HAP-1 (cell line): ENCODE measurements at regions of chr10 and their contacts with region 1.

Region 1: DNA sequence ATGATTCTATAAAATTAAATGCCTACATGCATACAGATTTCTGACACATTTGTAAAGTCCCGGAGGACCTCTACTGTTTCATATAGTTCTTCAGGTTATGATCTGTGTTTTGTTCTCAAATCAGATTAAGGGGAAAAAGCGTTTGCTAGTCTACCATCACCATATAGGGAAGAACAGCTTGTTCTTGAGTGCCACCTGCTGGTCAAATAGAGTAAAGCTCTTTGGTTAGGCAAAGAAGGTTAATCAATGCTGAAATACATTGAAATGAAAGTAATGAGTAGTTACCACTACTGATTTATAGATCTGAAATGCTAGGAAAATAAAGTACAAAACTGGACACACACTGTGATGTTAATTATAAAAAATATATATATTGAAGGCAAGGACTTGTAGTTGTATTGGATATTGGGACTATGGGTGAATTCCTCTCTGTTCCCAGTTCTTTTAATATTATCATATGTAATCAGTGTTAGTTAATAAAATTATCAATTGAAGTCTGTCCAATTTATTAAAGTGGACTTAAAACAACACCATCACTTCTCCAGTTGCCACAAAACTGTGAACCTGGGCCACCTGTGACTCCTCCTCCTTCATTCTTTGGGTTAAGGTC is 72.6 kb upstream of the PDLIM1 start:
- DNase-seq: peak; percentile 75 to 77
- H3K4me3 ChIP-seq: no peak overlapping the region
- H3K4me1 ChIP-seq: peaks cover 3% of the 10 kb centered on the region; the same call in 1 of the 2 replicates
- H3K27me3 ChIP-seq: no peaks in the 10 kb centered on the region

Region 2: GRCh38 chr10:95133016-95133752 is 230.2 kb before region 1 on chr10:
- in situ Hi-C with region 1: loop called (anchors 5 kb)
- DNase-seq: peak; percentile 68 to 91
- H3K4me3 ChIP-seq: no peak overlapping the region
- H3K4me1 ChIP-seq: no peaks in the 10 kb centered on the region
- H3K27me3 ChIP-seq: no peaks in the 10 kb centered on the region

Region 3: GRCh38 chr10:95183271-95184230 is 179.9 kb before region 1 on chr10:
- in situ Hi-C with region 1: loop called (anchors 10 kb)
- DNase-seq: peak; percentile 73 to 93
- H3K4me3 ChIP-seq: peak overlapping the region; percentile 46
- H3K4me1 ChIP-seq: peaks cover 6% of the 10 kb centered on the region
- H3K27me3 ChIP-seq: peaks cover 10% of the 10 kb centered on the region

Region 4: GRCh38 chr10:95246579-95247051 is 116.8 kb before region 1 on chr10:
- in situ Hi-C with region 1: loop called (anchors 5 kb)
- DNase-seq: peak; percentile 47 to 85
- H3K4me3 ChIP-seq: no peak overlapping the region
- H3K4me1 ChIP-seq: no peaks in the 10 kb centered on the region
- H3K27me3 ChIP-seq: no peaks in the 10 kb centered on the region